ENCODE measurements at regions of chr9 and their contacts with region 1.

Region 1: GRCh38 chr9:100028201-100028784 is 70.5 kb downstream of the ERP44 start:
- DNase-seq: peak; percentile 82

Region 2: GRCh38 chr9:99680191-99680590 is 348.1 kb before region 1 on chr9:
- intact Hi-C with region 1: no loop called
- DNase-seq: no peak

Region 3: GRCh38 chr9:100099722-100100042 is 71.4 kb after region 1 on chr9:
- intact Hi-C with region 1: loop called in 1 of 2 experiments (anchors 10 kb)
- DNase-seq: no peak

Region 4: GRCh38 chr9:100213730-100214477 is 185.6 kb after region 1 on chr9:
- intact Hi-C with region 1: loop called in 1 of 2 experiments (anchors 5 kb)
- DNase-seq: no peak

Measured in posterior vena cava (tissue), 2 donors.